Ovary (tissue), 10 donors: ENCODE measurements at regions of chr9 and their contacts with region 1.

Region 1: GRCh38 chr9:34203275-34203991 is 24.6 kb downstream of the UBAP1 start:
- DNase-seq: no peak
- H3K4me3 ChIP-seq: no peak overlapping the region
- H3K27ac ChIP-seq: no peak overlapping the region
- H3K4me1 ChIP-seq: peaks cover 14% of the 10 kb centered on the region
- H3K27me3 ChIP-seq: no peaks in the 10 kb centered on the region
- CTCF ChIP-seq: no peak
- EP300 ChIP-seq: no peak
- POLR2A ChIP-seq: no peak

Region 2: DNA sequence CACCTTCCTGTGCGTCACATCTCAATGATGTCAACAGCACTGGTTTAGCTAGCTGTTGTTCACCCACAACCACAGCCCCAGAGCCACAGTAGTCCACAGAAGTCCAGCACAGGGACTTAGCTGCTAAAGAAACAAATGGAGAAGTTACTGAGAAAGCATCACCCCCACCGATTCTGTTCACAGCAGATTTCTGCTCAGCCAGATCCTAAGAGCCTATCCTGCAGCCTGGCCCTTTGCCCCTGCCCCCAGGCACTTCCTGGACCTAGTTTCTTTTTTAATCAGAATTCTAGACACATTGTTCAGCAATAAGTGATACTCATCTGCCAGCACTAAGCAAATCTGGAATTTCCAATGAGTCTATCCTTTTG is 1043.7 kb before region 1 on chr9:
- intact Hi-C with region 1: loop called in 1 of 4 experiments (anchors 10 kb)
- DNase-seq: peak in 1 of 5 donors; percentile 28
- H3K4me3 ChIP-seq: no peak overlapping the region
- H3K27ac ChIP-seq: peak overlapping the region; percentile 44 to 95
- H3K4me1 ChIP-seq: peaks cover 40% of the 10 kb centered on the region
- H3K27me3 ChIP-seq: no peaks in the 10 kb centered on the region
- CTCF ChIP-seq: no peak
- EP300 ChIP-seq: no peak
- POLR2A ChIP-seq: no peak

Region 3: DNA sequence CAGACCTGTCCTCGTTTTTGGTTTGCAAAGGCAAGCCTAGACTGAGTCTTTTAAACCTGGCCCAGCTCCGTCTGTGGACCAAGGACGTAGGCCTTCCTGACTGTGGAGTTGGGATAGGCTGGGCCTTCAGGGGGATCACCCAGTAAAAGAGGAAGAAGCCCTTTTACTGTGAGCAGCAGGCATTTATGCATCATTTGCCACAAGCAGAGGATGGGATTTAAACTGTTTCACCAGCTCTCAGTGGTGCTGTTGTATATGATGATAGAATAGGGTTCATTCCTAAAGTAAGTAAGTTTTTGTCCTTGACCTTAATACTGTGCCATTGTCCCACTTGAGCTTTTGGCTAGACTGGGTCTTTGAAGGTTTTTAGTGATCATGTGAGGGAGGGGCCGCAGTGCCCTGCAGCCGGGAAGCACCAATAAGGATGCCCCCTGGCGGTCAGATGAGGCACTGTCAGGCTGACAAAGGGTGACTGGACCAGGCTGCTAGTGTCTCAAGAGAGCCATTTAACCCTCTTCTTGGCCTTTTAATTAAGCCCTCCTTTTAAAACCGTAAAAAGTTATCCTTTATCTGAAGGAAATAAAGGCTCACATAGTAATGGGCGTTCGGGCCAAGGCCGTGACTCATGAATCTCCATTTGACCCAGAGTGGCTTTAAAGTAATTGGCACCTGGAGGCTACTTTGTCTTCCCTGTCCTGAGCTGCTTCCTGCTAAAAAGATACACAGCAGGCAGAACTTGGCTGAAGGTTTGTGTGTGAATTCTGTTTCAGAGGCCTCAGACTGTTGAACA is 49.4 kb after region 1 on chr9:
- intact Hi-C with region 1: no loop called
- DNase-seq: peak; percentile 59 to 74 (median 68)
- H3K4me3 ChIP-seq: no peak overlapping the region
- H3K27ac ChIP-seq: peak overlapping the region; percentile 28 to 52
- H3K4me1 ChIP-seq: peaks cover 6% of the 10 kb centered on the region
- H3K27me3 ChIP-seq: no peaks in the 10 kb centered on the region
- CTCF ChIP-seq: peak; percentile 36 to 86 (median 56)
- EP300 ChIP-seq: no peak
- POLR2A ChIP-seq: no peak

Region 4: GRCh38 chr9:34546834-34547827 is 343.7 kb after region 1 on chr9:
- intact Hi-C with region 1: no loop called
- DNase-seq: peak in 2 of 5 donors; percentile 42 to 65
- H3K4me3 ChIP-seq: no peak overlapping the region
- H3K27ac ChIP-seq: no peak overlapping the region
- H3K4me1 ChIP-seq: no peaks in the 10 kb centered on the region
- H3K27me3 ChIP-seq: no peaks in the 10 kb centered on the region
- CTCF ChIP-seq: peak in 1 of 3 donors; percentile 35
- EP300 ChIP-seq: no peak
- POLR2A ChIP-seq: no peak